H1 (cell line): ENCODE measurements at regions of chr20 and their contacts with region 1.

Region 1: GRCh38 chr20:3795511-3796468 is at the start of gene CDC25B:
- DNase-seq: peak; percentile 56 to 87
- H3K4me3 ChIP-seq: peak within 1 kb of the TSS; percentile 30 to 85 (median 75)
- H3K27ac ChIP-seq: peak within 1 kb of the TSS; percentile 61; the same call in 1 of the 2 replicates
- H3K4me1 ChIP-seq: peaks cover 5 to 32% (median 25%) of the 10 kb centered on the region in 4 experiments
- H3K27me3 ChIP-seq: peaks cover 0 to 3% (median 0%) of the 10 kb centered on the region in 4 experiments; a peak in 1 of 7 replicates
- CTCF ChIP-seq: peak in 2 of 3 experiments; percentile 23 to 45; a peak in 2 of 4 replicates
- EP300 ChIP-seq: no peak
- POLR2A ChIP-seq: no peak; a peak in 1 of 3 replicates
- RAD21 ChIP-seq: peak; percentile 17 to 32; a peak in 2 of 4 replicates
- total RNA-seq, gene CDC25B: 30.3 and 31.2 TPM in 2 replicates

Region 2: GRCh38 chr20:3727401-3728021 is 68.3 kb before region 1 on chr20:
- CTCF ChIA-PET with region 1: no interaction called
- POLR2A ChIA-PET with region 1: no interaction called
- DNase-seq: no peak
- H3K4me3 ChIP-seq: no peak overlapping the region
- H3K27ac ChIP-seq: no peak overlapping the region
- H3K4me1 ChIP-seq: peaks cover 0 to 6% (median 2%) of the 10 kb centered on the region in 4 experiments; a peak in 3 of 7 replicates
- H3K27me3 ChIP-seq: peaks cover 1 to 18% (median 13%) of the 10 kb centered on the region in 4 experiments; a peak in 4 of 7 replicates
- CTCF ChIP-seq: no peak
- EP300 ChIP-seq: no peak
- POLR2A ChIP-seq: no peak
- RAD21 ChIP-seq: no peak

Region 3: DNA sequence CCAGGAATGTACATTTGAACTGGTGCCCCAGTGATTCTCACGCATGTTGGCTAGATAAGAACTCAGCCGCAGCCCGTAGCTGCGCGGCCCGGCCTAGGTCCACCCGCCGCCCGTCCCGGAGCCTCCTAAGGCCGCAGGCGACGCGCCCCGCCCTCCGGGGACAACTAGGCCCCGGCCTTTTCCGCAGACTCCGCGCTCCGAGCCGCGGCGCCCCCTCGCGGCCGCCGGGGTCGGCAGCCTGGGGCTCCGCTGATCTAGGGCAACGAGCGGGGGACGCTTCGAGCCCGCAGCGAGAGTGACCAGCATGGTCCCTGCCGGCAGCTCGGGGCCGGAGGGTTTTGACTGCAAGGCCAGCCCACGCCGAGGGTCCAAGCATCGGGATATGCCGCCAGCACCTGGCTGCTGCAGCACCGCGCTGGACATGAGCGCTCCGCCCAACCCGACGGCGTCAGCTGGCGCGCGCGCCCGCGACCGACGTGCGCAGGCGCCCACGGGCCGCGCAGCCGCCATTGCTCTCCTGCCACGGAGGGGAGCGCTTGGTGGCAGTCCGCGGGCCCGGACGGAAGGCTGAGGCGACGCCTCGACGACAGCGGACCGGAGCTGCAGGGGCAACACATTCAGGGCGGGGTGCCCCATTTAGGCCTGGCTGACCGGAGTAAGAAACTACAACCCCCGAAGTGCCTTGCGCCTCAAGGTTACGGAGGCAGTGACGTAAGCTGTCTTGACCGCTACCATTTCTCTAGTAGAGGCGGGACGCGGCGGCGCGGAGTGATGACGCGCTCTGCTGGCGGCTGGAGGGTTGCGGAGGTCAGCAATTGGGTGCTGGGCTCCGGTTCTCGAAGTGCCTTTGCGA is 24.5 kb after region 1 on chr20 and contains the start of gene AP5S1:
- CTCF ChIA-PET with region 1: interaction called, 16 read pairs
- POLR2A ChIA-PET with region 1: interaction called, 29 read pairs
- DNase-seq: peak; percentile 89 to 98
- H3K4me3 ChIP-seq: peak within 1 kb of the TSS; percentile 79 to 96 (median 90)
- H3K27ac ChIP-seq: peak within 1 kb of the TSS; percentile 92
- H3K4me1 ChIP-seq: peaks cover 0 to 13% (median 5%) of the 10 kb centered on the region in 4 experiments; a peak in 4 of 7 replicates
- H3K27me3 ChIP-seq: no peaks in the 10 kb centered on the region
- CTCF ChIP-seq: peak; percentile 83 to 96 (median 88)
- EP300 ChIP-seq: peak in 1 of 2 experiments; percentile 36; a peak in 1 of 3 replicates
- POLR2A ChIP-seq: peak; percentile 76 to 83
- RAD21 ChIP-seq: peak; percentile 69 to 81
- total RNA-seq, gene AP5S1: 3.4 and 3.7 TPM in 2 replicates

Region 4: GRCh38 chr20:3825526-3825925 is 29.7 kb after region 1 on chr20:
- CTCF ChIA-PET with region 1: interaction called, 15 read pairs
- POLR2A ChIA-PET with region 1: interaction called, 29 read pairs
- DNase-seq: no peak
- H3K4me3 ChIP-seq: no peak overlapping the region
- H3K27ac ChIP-seq: no peak overlapping the region
- H3K4me1 ChIP-seq: peaks cover 0 to 3% (median 1%) of the 10 kb centered on the region in 4 experiments; a peak in 1 of 7 replicates
- H3K27me3 ChIP-seq: no peaks in the 10 kb centered on the region
- CTCF ChIP-seq: peak; percentile 32 to 50 (median 36); a peak in 3 of 4 replicates
- EP300 ChIP-seq: no peak
- POLR2A ChIP-seq: no peak
- RAD21 ChIP-seq: no peak; a peak in 1 of 4 replicates